ENCODE measurements at regions of chr2 and their contacts with region 1.

Region 1: DNA sequence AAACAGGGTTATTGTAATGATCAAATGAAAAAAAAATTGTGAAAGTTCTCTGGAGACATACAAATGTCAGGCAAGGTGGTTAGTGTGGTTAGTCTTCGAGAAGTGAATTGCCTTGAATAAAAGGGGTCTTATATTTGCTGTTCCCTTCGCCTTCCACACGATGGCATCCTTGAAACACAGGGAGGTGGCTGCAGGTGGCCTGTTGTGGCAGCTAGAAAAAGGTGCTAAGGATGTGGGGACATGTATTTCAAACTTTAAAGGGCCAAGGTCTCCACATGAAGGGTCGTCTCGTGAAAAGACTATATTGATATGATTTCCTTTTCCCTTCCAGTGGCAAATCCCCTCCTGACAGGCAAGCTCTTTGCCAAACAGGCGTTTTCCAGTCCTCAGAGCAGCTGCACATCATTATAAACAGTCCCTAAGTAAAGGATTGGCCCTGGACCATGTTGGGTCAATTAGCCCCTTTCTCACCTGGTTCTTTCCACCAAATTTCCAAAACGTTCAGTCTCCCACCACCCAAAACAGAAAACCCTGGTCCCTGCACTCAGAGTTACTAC is 68.5 kb downstream of the COPS8 start:
- DNase-seq: peak in 5 of 7 donors; percentile 39 to 67 (median 48)
- H3K4me3 ChIP-seq: no peak overlapping the region
- H3K27ac ChIP-seq: no peak overlapping the region
- H3K4me1 ChIP-seq: peaks cover 0 to 3% of the 10 kb centered on the region in 2 donors
- H3K27me3 ChIP-seq: no peaks in the 10 kb centered on the region
- CTCF ChIP-seq: peak; percentile 49 to 76 (median 62)
- POLR2A ChIP-seq: no peak

Region 2: GRCh38 chr2:237075749-237076599 is 78.2 kb before region 1 on chr2:
- intact Hi-C with region 1: no loop called
- DNase-seq: no peak
- H3K4me3 ChIP-seq: no peak overlapping the region
- H3K27ac ChIP-seq: no peak overlapping the region
- H3K4me1 ChIP-seq: no peaks in the 10 kb centered on the region
- H3K27me3 ChIP-seq: no peaks in the 10 kb centered on the region
- CTCF ChIP-seq: no peak
- POLR2A ChIP-seq: no peak

Region 3: DNA sequence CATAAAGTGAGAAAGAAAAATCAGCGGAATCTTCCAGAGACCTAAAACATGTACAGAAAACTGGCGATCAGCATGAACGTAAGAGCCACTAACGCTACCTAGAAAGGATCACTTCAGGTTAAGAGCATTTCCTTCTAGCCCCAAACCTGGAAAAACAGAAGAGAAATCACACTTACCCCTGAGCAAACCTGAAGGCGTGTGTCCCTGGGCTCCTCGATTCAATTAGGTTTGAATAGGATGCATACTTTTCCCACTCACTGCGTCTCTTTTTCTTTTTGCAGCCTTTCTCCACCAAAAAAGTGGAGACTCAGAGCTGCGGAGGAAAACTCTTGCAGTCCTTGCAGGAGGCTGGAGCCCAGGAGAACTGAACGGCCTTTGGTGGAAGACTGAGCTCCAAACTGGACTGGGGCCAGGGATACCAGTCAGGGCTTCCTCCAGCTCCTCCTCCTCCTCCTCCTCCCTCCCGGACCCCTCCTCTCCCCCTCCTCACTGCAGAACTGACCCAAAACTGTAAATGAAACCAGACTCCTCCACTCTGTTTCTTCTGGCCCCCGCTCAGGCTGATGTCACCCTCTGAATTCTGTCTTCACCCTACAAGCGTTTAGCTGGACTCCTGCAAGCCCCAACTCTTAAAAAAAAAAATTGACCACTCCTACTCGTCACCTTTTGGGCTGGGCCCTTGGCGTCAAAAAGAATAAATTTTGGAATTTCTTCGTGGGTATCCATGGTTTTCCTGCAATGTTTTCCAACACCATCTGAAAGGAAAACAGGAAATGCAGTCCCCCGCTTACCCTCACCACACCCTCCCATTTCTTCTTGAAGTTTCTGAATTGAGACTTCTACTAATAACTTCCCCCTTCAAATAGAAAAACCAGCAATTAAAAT is 259.9 kb after region 1 on chr2 and contains the start of gene COL6A3:
- intact Hi-C with region 1: loop called (anchors 5 kb)
- DNase-seq: peak in 4 of 7 donors; percentile 29 to 56 (median 35)
- H3K4me3 ChIP-seq: peak within 1 kb of the TSS in 1 of 4 donors; percentile 7
- H3K27ac ChIP-seq: peak within 1 kb of the TSS in 2 of 5 donors; percentile 61 to 63
- H3K4me1 ChIP-seq: no peaks in the 10 kb centered on the region
- H3K27me3 ChIP-seq: peaks cover 8% of the 10 kb centered on the region
- CTCF ChIP-seq: no peak
- POLR2A ChIP-seq: no peak
- total RNA-seq, gene COL6A3: 17.8 to 69.4 (median 45.3) TPM

Measured in adrenal gland (tissue), 19 donors.